Caco-2 (cell line): ENCODE measurements at regions of chr12 and their contacts with region 1.

Region 1: GRCh38 chr12:45298716-45299692 is 83.1 kb downstream of the ANO6 start:
- DNase-seq: peak in 1 of 2 experiments; percentile 45
- H3K4me3 ChIP-seq: no peak overlapping the region
- H3K4me3 Mint-ChIP-seq: no peak overlapping the region
- H3K27ac Mint-ChIP-seq: peak overlapping the region; percentile 72
- H3K4me1 ChIP-seq: peaks cover 71% of the 10 kb centered on the region
- H3K4me1 Mint-ChIP-seq: peaks cover 30% of the 10 kb centered on the region
- H3K27me3 ChIP-seq: no peaks in the 10 kb centered on the region
- H3K27me3 Mint-ChIP-seq: no peaks in the 10 kb centered on the region
- CTCF ChIP-seq: no peak

Region 2: DNA sequence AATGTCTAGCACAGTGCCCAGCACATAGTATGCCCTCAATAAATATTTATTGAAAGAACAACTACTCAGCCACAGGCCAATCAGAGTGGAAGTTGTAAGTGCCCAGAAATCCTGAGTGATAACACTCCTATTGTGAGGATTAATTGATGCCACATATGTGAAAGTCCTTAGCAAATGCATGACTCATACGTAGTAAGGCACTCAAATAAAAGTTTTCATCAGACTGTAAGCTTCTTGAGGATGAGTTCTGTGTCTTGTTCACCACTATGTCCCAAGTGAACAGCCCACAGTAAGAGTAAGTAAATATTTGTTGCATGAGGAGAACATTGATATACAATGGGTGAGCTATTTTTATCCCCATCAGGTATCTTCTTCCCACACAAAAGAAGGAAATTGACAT is 107.8 kb before region 1 on chr12:
- CTCF ChIA-PET with region 1: no interaction called
- POLR2A ChIA-PET with region 1: no interaction called
- intact Hi-C with region 1: loop called (anchors 1 kb)
- DNase-seq: no peak
- H3K4me3 ChIP-seq: no peak overlapping the region
- H3K4me3 Mint-ChIP-seq: no peak overlapping the region
- H3K27ac Mint-ChIP-seq: peak overlapping the region; percentile 95
- H3K4me1 ChIP-seq: peaks cover 57% of the 10 kb centered on the region
- H3K4me1 Mint-ChIP-seq: peaks cover 44% of the 10 kb centered on the region
- H3K27me3 ChIP-seq: no peaks in the 10 kb centered on the region
- H3K27me3 Mint-ChIP-seq: no peaks in the 10 kb centered on the region
- CTCF ChIP-seq: no peak

Region 3: GRCh38 chr12:45254254-45254653 is 44.8 kb before region 1 on chr12:
- CTCF ChIA-PET with region 1: no interaction called
- POLR2A ChIA-PET with region 1: no interaction called
- intact Hi-C with region 1: no loop called
- DNase-seq: no peak
- H3K4me3 ChIP-seq: no peak overlapping the region
- H3K4me3 Mint-ChIP-seq: no peak overlapping the region
- H3K27ac Mint-ChIP-seq: peak overlapping the region; percentile 80
- H3K4me1 ChIP-seq: peaks cover 42% of the 10 kb centered on the region
- H3K4me1 Mint-ChIP-seq: peaks cover 33% of the 10 kb centered on the region
- H3K27me3 ChIP-seq: no peaks in the 10 kb centered on the region
- H3K27me3 Mint-ChIP-seq: no peaks in the 10 kb centered on the region
- CTCF ChIP-seq: no peak

Region 4: GRCh38 chr12:45268672-45269411 is 30.2 kb before region 1 on chr12:
- CTCF ChIA-PET with region 1: no interaction called
- POLR2A ChIA-PET with region 1: interaction called, 3 read pairs
- intact Hi-C with region 1: loop called (anchors 1 kb)
- DNase-seq: peak in 1 of 2 experiments; percentile 62
- H3K4me3 ChIP-seq: no peak overlapping the region
- H3K4me3 Mint-ChIP-seq: no peak overlapping the region
- H3K27ac Mint-ChIP-seq: peak overlapping the region; percentile 13
- H3K4me1 ChIP-seq: peaks cover 62% of the 10 kb centered on the region
- H3K4me1 Mint-ChIP-seq: peaks cover 48% of the 10 kb centered on the region
- H3K27me3 ChIP-seq: no peaks in the 10 kb centered on the region
- H3K27me3 Mint-ChIP-seq: no peaks in the 10 kb centered on the region
- CTCF ChIP-seq: peak; percentile 45 to 63

Region 5: DNA sequence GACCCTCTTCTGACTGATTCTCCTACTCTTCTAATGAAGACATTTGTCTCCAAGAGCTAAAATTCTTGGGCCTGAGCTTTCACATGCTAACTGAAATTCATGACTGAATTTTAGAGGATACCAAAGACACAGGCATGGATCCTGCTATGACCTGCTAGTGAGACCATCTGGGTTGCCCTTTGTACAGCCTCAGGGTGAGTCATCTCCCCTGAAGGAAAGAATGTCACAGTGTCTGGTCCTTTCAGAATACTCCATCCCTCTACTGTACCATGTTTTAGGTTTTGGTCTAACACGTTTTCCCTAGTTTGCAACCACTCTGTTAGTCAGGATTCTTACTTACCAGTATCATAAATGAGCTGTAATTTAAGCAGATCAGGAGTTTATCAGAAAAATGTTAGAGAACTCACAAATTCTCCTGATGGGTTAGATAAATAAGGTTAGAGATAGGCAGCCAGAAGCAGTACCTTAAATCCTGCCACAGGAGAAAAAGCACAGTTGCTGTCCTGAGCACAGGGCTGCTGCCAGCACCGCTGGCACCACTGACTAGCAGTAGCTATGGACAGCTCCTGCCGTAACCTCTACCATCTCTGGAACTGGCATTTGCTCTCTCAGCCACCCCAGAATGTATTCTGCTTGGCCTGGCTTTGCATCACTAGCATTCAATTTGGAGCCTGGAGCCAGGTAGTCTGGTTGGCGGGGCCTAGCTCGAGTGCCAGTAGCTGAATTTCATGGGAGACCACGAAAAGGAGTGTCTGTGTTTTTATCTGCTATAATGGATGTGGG is 44.5 kb after region 1 on chr12:
- CTCF ChIA-PET with region 1: no interaction called
- POLR2A ChIA-PET with region 1: no interaction called
- intact Hi-C with region 1: loop called (anchors 2 kb)
- DNase-seq: peak; percentile 47 to 53
- H3K4me3 ChIP-seq: no peak overlapping the region
- H3K4me3 Mint-ChIP-seq: peak overlapping the region; percentile 8
- H3K27ac Mint-ChIP-seq: peak overlapping the region; percentile 45
- H3K4me1 ChIP-seq: peaks cover 28% of the 10 kb centered on the region
- H3K4me1 Mint-ChIP-seq: peaks cover 21% of the 10 kb centered on the region
- H3K27me3 ChIP-seq: no peaks in the 10 kb centered on the region
- H3K27me3 Mint-ChIP-seq: no peaks in the 10 kb centered on the region
- CTCF ChIP-seq: no peak

Region 6: GRCh38 chr12:45458854-45459807 is 160.1 kb after region 1 on chr12:
- CTCF ChIA-PET with region 1: no interaction called
- POLR2A ChIA-PET with region 1: no interaction called
- intact Hi-C with region 1: no loop called
- DNase-seq: no peak
- H3K4me3 ChIP-seq: no peak overlapping the region
- H3K4me3 Mint-ChIP-seq: no peak overlapping the region
- H3K27ac Mint-ChIP-seq: no peak overlapping the region
- H3K4me1 ChIP-seq: no peaks in the 10 kb centered on the region
- H3K4me1 Mint-ChIP-seq: no peaks in the 10 kb centered on the region
- H3K27me3 ChIP-seq: no peaks in the 10 kb centered on the region
- H3K27me3 Mint-ChIP-seq: peaks cover 4% of the 10 kb centered on the region
- CTCF ChIP-seq: no peak